ENCODE measurements at regions of chr6 and their contacts with region 1.

Region 1: DNA sequence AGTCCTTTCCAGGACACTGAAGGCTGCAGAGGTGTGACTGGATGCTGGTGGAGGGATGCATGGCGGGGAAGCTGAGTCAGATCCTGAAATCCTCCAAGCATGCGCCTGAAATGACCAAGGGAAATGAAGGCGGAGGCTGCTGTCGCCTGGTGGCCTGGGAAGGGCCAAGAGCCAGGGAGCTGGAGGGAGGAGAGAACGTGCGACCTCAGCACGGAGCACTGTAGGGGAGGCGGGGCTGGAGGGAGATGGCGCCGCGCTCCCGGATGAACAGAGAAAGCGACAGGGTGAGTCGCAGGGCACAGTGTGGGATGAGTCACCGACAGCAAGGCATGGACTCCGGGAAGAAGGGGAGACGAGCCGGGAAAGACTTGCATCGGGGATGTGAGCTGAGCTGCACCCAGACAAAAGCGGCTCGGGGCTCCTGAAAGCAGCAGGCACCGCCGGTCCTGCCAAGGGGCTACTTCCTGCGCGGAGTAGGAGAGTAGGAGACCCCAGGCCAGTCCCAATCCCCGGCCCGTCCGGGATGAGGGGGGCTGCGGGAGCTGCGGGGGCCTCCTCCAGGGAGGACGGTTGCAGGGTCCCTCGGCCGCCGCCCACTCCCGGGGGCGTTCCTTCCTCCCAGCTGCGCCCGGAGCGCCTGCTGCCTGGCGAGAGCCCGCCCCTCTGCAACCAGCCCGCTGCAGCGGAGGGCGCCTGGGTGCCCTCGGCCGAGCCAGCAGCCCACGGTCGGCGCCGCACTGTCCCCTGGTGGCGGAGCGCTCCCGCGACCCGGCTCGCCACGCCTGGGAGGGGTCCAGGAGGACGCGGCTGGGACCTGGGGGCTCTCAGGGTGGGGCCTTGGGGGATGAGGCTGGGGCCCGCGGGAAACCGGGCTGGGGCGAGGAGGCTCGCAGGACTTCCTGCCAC is 11.0 kb upstream of the NQO2 start:
- DNase-seq: peak; percentile 58 to 93
- ATAC-seq: peak; percentile 91
- H3K4me3 ChIP-seq: peak overlapping the region; percentile 66
- H3K27ac ChIP-seq: peak overlapping the region; percentile 96 to 99
- H3K4me1 ChIP-seq: peaks cover 33% of the 10 kb centered on the region
- CTCF ChIP-seq: peak; percentile 67
- EP300 ChIP-seq: no peak
- POLR2A ChIP-seq: peak; percentile 64
- RAD21 ChIP-seq: peak; percentile 66 to 82; a peak in 4 of 5 replicates

Region 2: GRCh38 chr6:2846873-2847224 is 141.8 kb before region 1 on chr6:
- CTCF ChIA-PET with region 1: interaction called, 37 read pairs
- POLR2A ChIA-PET with region 1: interaction called, 25 read pairs
- DNase-seq: no peak
- ATAC-seq: 0 out of 6 replicates have a peak, but pooled peaks of 1 of the 2 experiments have one; percentile 21
- H3K4me3 ChIP-seq: peak overlapping the region; percentile 13; the same call in 1 of the 3 replicates
- H3K27ac ChIP-seq: peak overlapping the region; percentile 81 to 94
- H3K4me1 ChIP-seq: peaks cover 39% of the 10 kb centered on the region
- CTCF ChIP-seq: no peak
- EP300 ChIP-seq: no peak
- POLR2A ChIP-seq: no peak
- RAD21 ChIP-seq: no peak

Region 3: GRCh38 chr6:2952557-2953095 is 36.1 kb before region 1 on chr6:
- CTCF ChIA-PET with region 1: interaction called, 142 read pairs
- POLR2A ChIA-PET with region 1: interaction called, 19 read pairs
- DNase-seq: peak; percentile 58 to 93
- ATAC-seq: peak; percentile 97 to 99
- H3K4me3 ChIP-seq: no peak overlapping the region
- H3K27ac ChIP-seq: peak overlapping the region; percentile 1 to 73; a peak in 4 of 6 replicates
- H3K4me1 ChIP-seq: peaks cover 13% of the 10 kb centered on the region
- CTCF ChIP-seq: peak; percentile 92
- EP300 ChIP-seq: no peak
- POLR2A ChIP-seq: no peak
- RAD21 ChIP-seq: peak; percentile 53 to 69

Region 4: GRCh38 chr6:2971420-2972218 is 17.1 kb before region 1 on chr6 and contains the start of gene SERPINB6:
- CTCF ChIA-PET with region 1: interaction called, 21 read pairs
- POLR2A ChIA-PET with region 1: interaction called, 35 read pairs
- DNase-seq: peak; percentile 27 to 53
- ATAC-seq: peak; percentile 85 to 89
- H3K4me3 ChIP-seq: peak within 1 kb of the TSS; percentile 86
- H3K27ac ChIP-seq: peak within 1 kb of the TSS; percentile 88 to 99
- H3K4me1 ChIP-seq: peaks cover 20% of the 10 kb centered on the region
- CTCF ChIP-seq: 0 out of 3 replicates have a peak, but pooled peaks have one; percentile 9
- EP300 ChIP-seq: no peak
- POLR2A ChIP-seq: 0 out of 2 replicates have a peak, but pooled peaks have one; percentile 20
- RAD21 ChIP-seq: no peak
- polyA plus RNA-seq, gene SERPINB6: 107 and 126 TPM in 2 replicates

Region 5: GRCh38 chr6:2999618-3000557 is 11.2 kb after region 1 on chr6 and contains the start of gene NQO2:
- CTCF ChIA-PET with region 1: interaction called, 18 read pairs
- POLR2A ChIA-PET with region 1: interaction called, 22 read pairs
- DNase-seq: peak; percentile 80 to 84
- ATAC-seq: peak; percentile 75 to 81
- H3K4me3 ChIP-seq: peak within 1 kb of the TSS; percentile 69
- H3K27ac ChIP-seq: peak within 1 kb of the TSS; percentile 90 to 98
- H3K4me1 ChIP-seq: peaks cover 23% of the 10 kb centered on the region
- CTCF ChIP-seq: no peak
- EP300 ChIP-seq: no peak
- POLR2A ChIP-seq: peak; percentile 96
- RAD21 ChIP-seq: no peak
- polyA plus RNA-seq, gene NQO2: 77.0 and 86.5 TPM in 2 replicates